Uterus (tissue), 4 donors: ENCODE measurements at regions of chr20 and their contacts with region 1.

Region 1: DNA sequence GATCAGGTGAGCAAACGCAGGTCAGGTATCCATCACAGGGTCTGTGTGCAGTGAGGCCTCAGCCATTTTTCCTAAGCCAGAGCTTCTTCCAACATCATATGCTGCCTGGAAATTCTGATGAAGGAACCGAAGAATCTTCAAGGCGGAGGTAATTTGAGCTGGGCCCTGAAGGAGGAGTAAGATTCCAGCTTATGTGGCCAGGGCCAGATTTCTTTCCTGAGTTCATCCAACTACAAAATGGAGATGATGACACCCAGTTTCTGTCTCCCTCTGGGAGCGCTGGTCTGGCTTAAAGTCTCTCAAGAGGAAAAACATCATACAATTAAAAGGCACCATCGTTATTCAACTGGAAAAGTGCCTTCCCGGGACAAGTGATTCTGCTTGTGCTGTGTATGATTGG is 6.9 kb upstream of the MANBAL start:
- DNase-seq: peak; percentile 50 to 65
- H3K4me3 ChIP-seq: no peak overlapping the region
- H3K27ac ChIP-seq: peak overlapping the region; percentile 46 to 55
- H3K4me1 ChIP-seq: no peaks in the 10 kb centered on the region
- H3K27me3 ChIP-seq: no peaks in the 10 kb centered on the region
- CTCF ChIP-seq: peak; percentile 60 to 73 (median 68)
- POLR2A ChIP-seq: no peak

Region 2: DNA sequence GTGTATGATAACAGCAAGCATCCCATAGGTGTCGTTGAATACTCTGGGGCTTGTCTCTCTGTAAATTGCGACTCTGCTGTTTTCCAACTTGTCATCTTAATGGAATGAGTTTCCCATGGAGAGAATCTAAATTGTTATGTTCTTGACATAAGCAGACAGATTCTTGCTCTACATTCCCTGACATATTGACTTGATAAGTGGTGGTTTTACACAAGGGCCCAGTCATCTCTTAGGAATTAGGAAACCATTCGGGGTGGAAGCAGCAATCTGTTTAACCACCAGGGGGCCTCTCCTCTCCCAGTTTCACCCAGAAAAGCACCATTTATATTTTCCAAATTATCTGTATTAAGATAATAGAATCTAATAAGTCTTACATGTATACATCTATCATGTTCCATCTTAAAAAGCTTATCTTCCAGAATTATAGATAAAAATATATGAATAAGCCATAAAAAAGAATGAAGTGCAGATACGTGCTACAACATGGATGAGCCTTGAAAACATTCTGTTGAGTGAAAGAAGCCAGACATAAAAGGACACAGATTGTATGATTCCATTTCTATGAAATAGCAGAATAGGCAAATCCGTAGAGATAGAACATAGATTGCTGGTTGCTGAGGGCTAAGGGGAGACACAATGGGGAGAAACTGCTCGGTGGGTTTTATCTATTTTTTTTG is 80.2 kb before region 1 on chr20:
- intact Hi-C with region 1: no loop called
- DNase-seq: peak; percentile 59 to 60
- H3K4me3 ChIP-seq: no peak overlapping the region
- H3K27ac ChIP-seq: peak overlapping the region; percentile 67 to 72
- H3K4me1 ChIP-seq: no peaks in the 10 kb centered on the region
- H3K27me3 ChIP-seq: no peaks in the 10 kb centered on the region
- CTCF ChIP-seq: peak; percentile 58 to 86 (median 68)
- POLR2A ChIP-seq: no peak

Region 3: DNA sequence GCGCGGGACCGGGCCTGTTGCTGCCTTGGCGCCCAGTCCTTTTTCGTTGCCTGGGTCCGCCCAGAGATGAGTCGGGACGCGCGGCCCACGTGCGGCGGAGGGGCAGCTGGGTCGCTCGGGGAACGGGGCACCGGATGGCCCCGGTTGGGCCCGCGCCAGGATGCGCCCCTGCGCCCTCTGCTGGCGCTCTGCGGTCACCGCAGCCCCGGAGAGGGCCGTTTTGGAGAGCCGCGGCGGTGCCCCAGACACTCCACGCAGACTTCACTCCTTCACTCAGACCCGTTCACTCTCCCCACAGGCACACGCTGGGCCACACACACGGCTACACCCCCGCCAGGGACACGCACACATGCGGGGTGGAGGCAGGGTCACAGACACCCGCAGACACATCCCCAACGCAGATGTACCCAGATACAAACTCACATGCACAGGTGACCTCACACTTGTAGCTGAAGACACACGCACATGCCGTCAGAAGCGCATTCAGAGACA is 102.2 kb after region 1 on chr20:
- intact Hi-C with region 1: loop called (anchors 5 kb)
- DNase-seq: peak; percentile 57 to 81
- H3K4me3 ChIP-seq: peak overlapping the region; percentile 2 to 46
- H3K27ac ChIP-seq: peak overlapping the region; percentile 20 to 59
- H3K4me1 ChIP-seq: peaks cover 0 to 5% of the 10 kb centered on the region in 2 donors
- H3K27me3 ChIP-seq: no peaks in the 10 kb centered on the region
- CTCF ChIP-seq: peak; percentile 77 to 97 (median 93)
- POLR2A ChIP-seq: peak in 1 of 2 donors; percentile 13